ENCODE measurements at regions of chr13 and their contacts with region 1.

Region 1: DNA sequence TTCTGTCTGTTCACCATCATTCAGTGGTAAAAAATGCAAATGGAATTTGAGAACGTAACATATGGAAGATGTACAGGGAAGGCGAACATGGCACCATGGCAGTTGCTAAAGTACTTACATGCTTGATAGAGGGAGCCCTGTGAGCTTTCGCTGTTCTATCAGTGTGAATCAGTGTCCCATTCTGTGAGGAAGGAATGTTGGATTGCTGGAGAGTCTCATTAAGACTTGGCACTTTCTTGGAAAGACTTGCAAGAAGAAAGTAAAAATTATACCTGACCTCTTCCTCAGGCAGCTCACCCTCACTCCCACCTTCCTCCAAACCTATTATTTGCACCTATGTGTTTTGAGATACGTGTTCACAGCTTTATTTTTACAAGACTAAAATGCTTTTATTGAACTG is 43.5 kb downstream of the FREM2 start:
- DNase-seq: no peak
- H3K4me3 ChIP-seq: no peak overlapping the region
- H3K27ac ChIP-seq: no peak overlapping the region
- H3K4me1 ChIP-seq: no peaks in the 10 kb centered on the region
- H3K27me3 ChIP-seq: no peaks in the 10 kb centered on the region
- CTCF ChIP-seq: no peak
- POLR2A ChIP-seq: no peak

Region 2: GRCh38 chr13:38752653-38753052 is 22.3 kb after region 1 on chr13:
- intact Hi-C with region 1: loop called (anchors 2 kb)
- DNase-seq: no peak
- H3K4me3 ChIP-seq: no peak overlapping the region
- H3K27ac ChIP-seq: no peak overlapping the region
- H3K4me1 ChIP-seq: no peaks in the 10 kb centered on the region
- H3K27me3 ChIP-seq: no peaks in the 10 kb centered on the region
- CTCF ChIP-seq: no peak
- POLR2A ChIP-seq: no peak

Measured in vagina (tissue), 2 donors.